CD4-positive, alpha-beta memory T cell (primary cell): ENCODE measurements at regions of chr19 and their contacts with region 1.

Region 1: GRCh38 chr19:17419621-17420466 is at the start of gene MVB12A:
- DNase-seq: peak; percentile 94 to 98 (median 97)
- H3K4me3 ChIP-seq: peak within 1 kb of the TSS; percentile 69 to 92
- H3K4me3 Mint-ChIP-seq: peak within 1 kb of the TSS; percentile 91 to 97 (median 94)
- H3K27ac ChIP-seq: peak within 1 kb of the TSS; percentile 67
- H3K27ac Mint-ChIP-seq: peak within 1 kb of the TSS; percentile 91 to 96 (median 93)
- H3K4me1 ChIP-seq: peaks cover 17% of the 10 kb centered on the region
- H3K4me1 Mint-ChIP-seq: peaks cover 13 to 26% (median 16%) of the 10 kb centered on the region in 4 donors
- H3K27me3 ChIP-seq: no peaks in the 10 kb centered on the region
- H3K27me3 Mint-ChIP-seq: no peaks in the 10 kb centered on the region
- total RNA-seq, gene MVB12A: 35.4 to 38.0 TPM

Region 2: DNA sequence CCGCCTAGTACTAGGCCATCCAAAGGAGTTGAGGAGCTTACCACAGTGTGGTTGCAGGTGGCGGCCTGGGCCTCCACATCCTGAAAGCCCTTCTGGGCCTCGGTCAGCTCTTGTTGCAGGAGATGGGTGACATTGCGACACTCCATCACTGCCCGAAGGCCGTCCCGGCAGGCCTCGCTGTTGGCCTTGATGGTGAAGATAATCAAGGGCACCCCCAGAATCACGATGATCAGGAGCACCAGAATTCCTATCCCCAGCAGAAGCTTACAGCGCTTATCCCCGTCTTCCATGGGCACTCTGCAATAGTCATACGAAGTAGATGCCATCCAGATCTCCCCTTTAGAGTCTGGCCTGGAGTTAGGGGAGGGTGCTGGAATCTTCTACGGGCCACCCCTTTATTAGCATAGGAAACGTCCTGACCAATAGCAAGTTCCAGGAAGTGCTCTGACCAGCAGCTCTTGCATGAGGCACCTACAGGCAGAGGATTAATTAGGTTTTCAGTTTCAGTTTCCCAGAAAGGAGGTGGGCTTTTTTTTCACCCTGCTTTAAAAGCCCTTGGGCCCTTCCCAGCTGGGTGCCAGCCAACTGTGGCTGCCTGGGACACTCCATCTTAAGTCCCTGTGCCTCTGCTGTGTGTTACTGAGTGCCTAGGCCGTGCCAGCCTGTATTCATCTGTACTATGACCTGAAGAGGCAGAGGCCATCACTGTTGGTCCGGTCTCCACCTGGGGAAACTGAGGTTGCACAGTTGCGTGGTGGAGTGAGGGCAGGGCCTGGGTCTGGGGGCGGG is 14.4 kb before region 1 on chr19 and contains the start of gene BST2:
- CTCF ChIA-PET with region 1: interaction called, 13 read pairs
- POLR2A ChIA-PET with region 1: interaction called, 87 read pairs
- intact Hi-C with region 1: loop called (anchors 1 kb)
- DNase-seq: peak; percentile 60 to 80 (median 65)
- H3K4me3 ChIP-seq: peak within 1 kb of the TSS; percentile 93 to 98
- H3K4me3 Mint-ChIP-seq: peak within 1 kb of the TSS; percentile 94 to 98 (median 94)
- H3K27ac ChIP-seq: peak within 1 kb of the TSS; percentile 88
- H3K27ac Mint-ChIP-seq: peak within 1 kb of the TSS; percentile 93 to 96 (median 94)
- H3K4me1 ChIP-seq: peaks cover 32% of the 10 kb centered on the region
- H3K4me1 Mint-ChIP-seq: peaks cover 20 to 45% (median 29%) of the 10 kb centered on the region in 4 donors
- H3K27me3 ChIP-seq: no peaks in the 10 kb centered on the region
- H3K27me3 Mint-ChIP-seq: no peaks in the 10 kb centered on the region
- total RNA-seq, gene BST2: 55.9 TPM

Region 3: GRCh38 chr19:17909003-17909732 is 489.3 kb after region 1 on chr19:
- CTCF ChIA-PET with region 1: no interaction called
- POLR2A ChIA-PET with region 1: no interaction called
- intact Hi-C with region 1: no loop called
- DNase-seq: no peak
- H3K4me3 ChIP-seq: no peak overlapping the region
- H3K4me3 Mint-ChIP-seq: no peak overlapping the region
- H3K27ac ChIP-seq: no peak overlapping the region
- H3K27ac Mint-ChIP-seq: no peak overlapping the region
- H3K4me1 ChIP-seq: no peaks in the 10 kb centered on the region
- H3K4me1 Mint-ChIP-seq: no peaks in the 10 kb centered on the region
- H3K27me3 ChIP-seq: no peaks in the 10 kb centered on the region
- H3K27me3 Mint-ChIP-seq: peaks cover 0 to 5% of the 10 kb centered on the region in 2 donors